Prostate gland (tissue), 2 donors: ENCODE measurements at regions of chr2 and their contacts with region 1.

Region 1: GRCh38 chr2:55168221-55169154 is 63.6 kb downstream of the CLHC1 start:
- DNase-seq: peak; percentile 58
- H3K4me3 ChIP-seq: no peak overlapping the region
- H3K27ac ChIP-seq: peak overlapping the region; percentile 48 to 54
- H3K4me1 ChIP-seq: peaks cover 12% of the 10 kb centered on the region
- H3K27me3 ChIP-seq: no peaks in the 10 kb centered on the region
- CTCF ChIP-seq: peak; percentile 60 to 80 (median 71)
- POLR2A ChIP-seq: no peak

Region 2: GRCh38 chr2:54899576-54900200 is 268.8 kb before region 1 on chr2:
- intact Hi-C with region 1: loop called (anchors 2 kb)
- DNase-seq: peak; percentile 64
- H3K4me3 ChIP-seq: no peak overlapping the region
- H3K27ac ChIP-seq: no peak overlapping the region
- H3K4me1 ChIP-seq: no peaks in the 10 kb centered on the region
- H3K27me3 ChIP-seq: no peaks in the 10 kb centered on the region
- CTCF ChIP-seq: peak; percentile 19 to 75 (median 70)
- POLR2A ChIP-seq: no peak

Region 3: GRCh38 chr2:54979321-54980041 is 189.0 kb before region 1 on chr2:
- intact Hi-C with region 1: no loop called
- DNase-seq: peak; percentile 90
- H3K4me3 ChIP-seq: no peak overlapping the region
- H3K27ac ChIP-seq: peak overlapping the region; percentile 34 to 65
- H3K4me1 ChIP-seq: peaks cover 16% of the 10 kb centered on the region
- H3K27me3 ChIP-seq: no peaks in the 10 kb centered on the region
- CTCF ChIP-seq: no peak
- POLR2A ChIP-seq: no peak

Region 4: DNA sequence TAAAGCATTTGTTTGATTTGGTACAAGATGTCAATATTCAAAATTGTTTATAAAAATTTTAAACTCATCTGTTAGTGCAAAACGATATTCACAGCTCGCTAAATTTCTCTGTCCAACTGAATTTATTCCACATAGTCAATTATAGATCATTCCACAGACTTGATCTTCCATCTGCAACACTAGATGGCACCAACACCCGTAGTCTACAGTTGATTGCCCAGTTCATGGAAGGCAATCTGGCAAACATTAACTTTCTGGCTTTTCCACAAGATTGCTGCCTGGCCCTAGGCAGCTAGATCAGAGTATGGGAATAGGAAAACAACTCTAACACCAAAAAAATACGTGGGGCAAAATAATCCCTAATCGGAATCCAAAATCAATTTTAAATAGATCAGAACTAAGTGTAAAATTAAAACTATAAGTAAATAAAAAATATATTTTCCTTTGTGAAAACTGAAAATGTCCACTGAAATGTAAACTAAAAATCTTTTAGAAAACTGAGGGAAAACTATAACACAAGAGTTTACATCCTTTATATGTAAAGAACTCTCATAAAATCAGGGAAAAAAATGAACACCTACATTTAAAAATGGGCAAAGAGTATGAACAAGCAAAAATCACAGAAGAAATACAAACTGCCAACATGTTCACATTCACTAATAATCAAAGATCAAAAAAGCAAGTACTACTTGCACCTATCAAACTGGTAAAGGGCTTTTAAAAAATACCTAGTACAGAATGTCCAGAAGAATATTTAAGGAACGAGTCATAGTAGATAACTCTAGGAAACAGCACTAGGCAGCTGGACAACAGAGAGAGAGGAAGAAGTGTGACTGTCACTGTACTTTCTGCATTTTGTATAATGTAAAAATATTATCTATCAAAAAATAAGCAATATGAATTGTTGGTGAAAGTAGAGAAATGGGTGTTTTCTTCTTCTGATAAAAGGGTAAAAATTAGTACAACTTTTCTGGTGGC is 153.2 kb before region 1 on chr2:
- intact Hi-C with region 1: loop called (anchors 5 kb)
- DNase-seq: peak; percentile 58
- H3K4me3 ChIP-seq: no peak overlapping the region
- H3K27ac ChIP-seq: peak overlapping the region in 1 of 2 donors; percentile 7
- H3K4me1 ChIP-seq: peaks cover 24% of the 10 kb centered on the region
- H3K27me3 ChIP-seq: no peaks in the 10 kb centered on the region
- CTCF ChIP-seq: peak in 3 of 4 experiments; percentile 53 to 82 (median 71)
- POLR2A ChIP-seq: no peak

Region 5: DNA sequence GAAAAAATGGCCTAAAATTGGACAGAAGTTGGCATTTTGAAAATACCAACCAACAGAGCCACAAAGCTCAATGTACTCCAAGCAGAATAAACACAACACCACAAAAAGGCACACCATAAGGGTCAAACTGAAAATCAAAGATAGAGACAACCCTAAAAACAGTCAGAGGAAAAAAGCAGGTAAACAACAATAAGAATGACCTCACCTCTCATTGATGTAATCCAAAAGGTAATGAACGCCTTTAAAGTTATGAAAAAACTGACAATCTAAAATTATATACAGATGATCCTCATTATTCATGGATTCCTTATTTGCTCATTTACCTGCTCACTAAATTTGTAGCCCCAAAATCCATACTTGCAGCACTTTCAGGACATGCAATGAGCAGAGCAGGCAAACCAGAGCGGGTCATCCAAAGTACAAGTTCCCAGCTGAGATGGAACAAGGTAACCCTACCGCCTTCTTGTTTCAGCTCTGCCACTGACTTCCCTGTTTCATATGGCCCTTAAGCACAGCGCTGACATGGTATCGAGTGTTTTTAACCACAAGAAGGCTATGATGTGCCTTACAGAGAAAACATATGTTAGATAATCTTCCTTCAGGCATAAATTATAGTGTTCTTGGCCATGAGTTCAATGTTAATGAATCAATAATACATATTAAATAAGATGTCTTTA is 135.3 kb before region 1 on chr2:
- intact Hi-C with region 1: loop called (anchors 5 kb)
- DNase-seq: no peak
- H3K4me3 ChIP-seq: no peak overlapping the region
- H3K27ac ChIP-seq: no peak overlapping the region
- H3K4me1 ChIP-seq: no peaks in the 10 kb centered on the region
- H3K27me3 ChIP-seq: no peaks in the 10 kb centered on the region
- CTCF ChIP-seq: no peak
- POLR2A ChIP-seq: no peak

Region 6: GRCh38 chr2:55050133-55050994 is 118.1 kb before region 1 on chr2 and contains the start of gene RTN4:
- intact Hi-C with region 1: loop called (anchors 2 kb)
- DNase-seq: peak; percentile 99
- H3K4me3 ChIP-seq: peak within 1 kb of the TSS; percentile 97 to 100
- H3K27ac ChIP-seq: peak within 1 kb of the TSS; percentile 98 to 99
- H3K4me1 ChIP-seq: peaks cover 8% of the 10 kb centered on the region
- H3K27me3 ChIP-seq: no peaks in the 10 kb centered on the region
- CTCF ChIP-seq: peak in 1 of 4 experiments; percentile 21
- POLR2A ChIP-seq: peak; percentile 100
- total RNA-seq, gene RTN4: 190 to 249 TPM

Region 7: DNA sequence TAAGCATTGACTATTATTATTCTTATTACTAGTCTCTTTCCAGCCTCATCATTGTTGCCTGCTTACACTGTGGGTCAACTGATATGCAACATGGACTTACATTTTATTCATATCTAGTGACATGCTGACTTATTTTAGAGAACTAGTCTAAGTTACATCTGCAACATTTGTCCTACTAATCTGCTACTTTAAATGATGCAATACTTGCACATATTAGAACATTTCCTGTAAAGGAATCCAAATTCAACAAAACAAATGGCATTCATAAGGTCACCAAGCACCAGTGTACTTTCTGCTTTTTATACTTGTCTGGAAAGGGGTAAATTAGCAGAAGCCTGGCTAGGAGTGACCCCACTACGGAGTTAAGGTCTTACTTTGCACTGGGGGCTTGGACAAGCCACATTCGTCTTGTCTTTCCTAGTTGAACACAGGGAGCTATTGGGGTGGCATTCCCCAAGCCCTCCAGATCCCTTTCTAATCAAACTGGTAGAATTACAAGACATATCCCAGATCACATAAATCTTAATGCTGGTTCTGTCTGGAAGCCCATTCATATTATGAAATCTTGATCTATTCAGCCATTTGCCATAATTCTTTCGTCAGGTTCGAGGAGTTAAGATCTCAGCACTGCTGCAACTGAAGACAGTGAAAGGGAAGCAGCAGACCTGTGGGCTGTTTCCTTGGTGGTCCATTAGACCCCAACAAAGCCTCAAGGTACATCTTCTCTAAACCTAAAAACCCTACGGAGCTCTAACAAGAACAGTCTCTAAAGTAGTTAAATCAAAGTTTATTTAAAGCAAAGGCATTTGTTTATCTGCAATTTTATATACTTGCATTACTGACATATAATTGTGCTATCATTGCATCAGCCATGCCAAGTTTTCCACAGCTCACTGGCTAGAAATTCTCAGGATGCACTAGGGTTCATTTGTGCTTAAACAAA is 68.3 kb before region 1 on chr2:
- intact Hi-C with region 1: loop called (anchors 5 kb)
- DNase-seq: peak; percentile 52
- H3K4me3 ChIP-seq: peak overlapping the region in 1 of 2 donors; percentile 5
- H3K27ac ChIP-seq: peak overlapping the region; percentile 71 to 85
- H3K4me1 ChIP-seq: peaks cover 7% of the 10 kb centered on the region
- H3K27me3 ChIP-seq: no peaks in the 10 kb centered on the region
- CTCF ChIP-seq: no peak
- POLR2A ChIP-seq: no peak